PC-3 (cell line): ENCODE measurements at regions of chr1 and their contacts with region 1.

Region 1: DNA sequence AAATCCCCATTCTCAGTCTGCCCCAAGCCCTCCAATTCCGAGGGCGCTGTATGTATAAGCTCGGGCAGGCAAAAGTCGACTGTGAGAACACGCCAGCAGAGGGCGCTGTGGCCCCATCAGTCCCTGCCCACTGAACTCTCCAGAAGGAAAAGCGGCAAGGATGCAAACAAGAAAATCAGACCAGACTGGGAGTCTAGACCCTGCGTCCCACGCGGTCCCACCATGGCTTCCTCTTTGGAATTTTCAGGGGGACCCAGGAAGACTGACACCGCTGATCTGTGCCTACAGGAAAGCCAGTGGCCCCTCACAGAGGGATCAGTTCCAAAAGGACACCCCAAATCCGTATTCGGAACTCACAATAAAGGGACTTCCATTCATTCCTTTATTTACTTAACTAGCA is 19.5 kb downstream of the TEX35 start:
- DNase-seq: peak; percentile 85
- ATAC-seq: peak; percentile 42
- H3K4me3 ChIP-seq: peak overlapping the region; percentile 46; the same call in 1 of the 2 replicates
- H3K27ac ChIP-seq: no peak overlapping the region
- H3K4me1 ChIP-seq: peaks cover 45% of the 10 kb centered on the region
- H3K27me3 ChIP-seq: no peaks in the 10 kb centered on the region
- CTCF ChIP-seq: peak; percentile 82

Region 2: GRCh38 chr1:178898401-178898800 is 366.0 kb after region 1 on chr1:
- CTCF ChIA-PET with region 1: no interaction called
- POLR2A ChIA-PET with region 1: no interaction called
- intact Hi-C with region 1: loop called (anchors 10 kb)
- DNase-seq: no peak
- ATAC-seq: no peak
- H3K4me3 ChIP-seq: no peak overlapping the region
- H3K27ac ChIP-seq: no peak overlapping the region
- H3K4me1 ChIP-seq: no peaks in the 10 kb centered on the region
- H3K27me3 ChIP-seq: no peaks in the 10 kb centered on the region
- CTCF ChIP-seq: no peak